Heart left ventricle (tissue), 16 donors: ENCODE measurements at regions of chr6 and their contacts with region 1.

Region 1: DNA sequence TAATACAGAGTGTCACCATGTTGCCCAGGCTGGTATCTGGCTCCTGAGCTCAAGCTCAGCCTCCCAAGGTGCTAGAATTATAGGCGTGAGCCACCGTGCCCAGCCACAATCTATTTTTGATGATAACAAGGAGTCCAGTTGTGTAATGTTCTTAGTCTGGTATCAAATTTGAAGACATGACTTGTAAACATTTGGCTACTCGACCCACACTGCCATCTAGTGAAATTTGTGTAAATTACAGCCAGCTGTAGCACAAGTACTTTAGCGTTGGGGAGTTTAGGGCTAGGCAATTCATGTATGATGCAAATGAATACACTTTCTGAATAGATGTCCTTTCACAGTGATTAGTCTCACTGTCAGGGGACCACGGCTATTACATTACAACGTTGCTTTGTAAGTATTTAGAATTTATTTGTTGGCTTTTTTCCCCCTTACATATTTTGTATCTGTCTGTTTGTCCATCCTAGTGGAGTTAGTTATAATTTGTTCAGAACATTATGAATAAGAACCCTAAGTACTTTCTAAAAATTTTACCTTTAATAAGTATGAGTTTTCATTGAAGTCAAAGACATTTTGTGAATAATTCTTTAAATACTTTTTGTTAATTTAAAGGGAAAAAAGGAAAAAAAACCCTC is 139.7 kb downstream of the PRDM13 start:
- DNase-seq: peak in 3 of 5 donors; percentile 17 to 43 (median 33)
- ATAC-seq: peak in 3 of 4 donors; percentile 60 to 72 (median 70)
- H3K4me3 ChIP-seq: no peak overlapping the region
- H3K27ac ChIP-seq: no peak overlapping the region
- H3K4me1 ChIP-seq: peaks cover 0 to 3% (median 0%) of the 10 kb centered on the region in 12 donors
- H3K27me3 ChIP-seq: peaks cover 0 to 24% (median 0%) of the 10 kb centered on the region in 9 donors
- CTCF ChIP-seq: peak; percentile 64 to 91 (median 82)
- POLR2A ChIP-seq: no peak

Region 2: GRCh38 chr6:99330159-99330558 is 416.2 kb before region 1 on chr6:
- intact Hi-C with region 1: loop called in 2 of 10 experiments (anchors 10 kb)
- DNase-seq: peak in 2 of 5 donors; percentile 22 to 29
- ATAC-seq: peak in 3 of 4 donors; percentile 42 to 53 (median 50)
- H3K4me3 ChIP-seq: no peak overlapping the region
- H3K27ac ChIP-seq: no peak overlapping the region
- H3K4me1 ChIP-seq: no peaks in the 10 kb centered on the region
- H3K27me3 ChIP-seq: peaks cover 0 to 6% (median 0%) of the 10 kb centered on the region in 9 donors
- CTCF ChIP-seq: peak; percentile 44 to 82 (median 66)
- POLR2A ChIP-seq: no peak

Region 3: DNA sequence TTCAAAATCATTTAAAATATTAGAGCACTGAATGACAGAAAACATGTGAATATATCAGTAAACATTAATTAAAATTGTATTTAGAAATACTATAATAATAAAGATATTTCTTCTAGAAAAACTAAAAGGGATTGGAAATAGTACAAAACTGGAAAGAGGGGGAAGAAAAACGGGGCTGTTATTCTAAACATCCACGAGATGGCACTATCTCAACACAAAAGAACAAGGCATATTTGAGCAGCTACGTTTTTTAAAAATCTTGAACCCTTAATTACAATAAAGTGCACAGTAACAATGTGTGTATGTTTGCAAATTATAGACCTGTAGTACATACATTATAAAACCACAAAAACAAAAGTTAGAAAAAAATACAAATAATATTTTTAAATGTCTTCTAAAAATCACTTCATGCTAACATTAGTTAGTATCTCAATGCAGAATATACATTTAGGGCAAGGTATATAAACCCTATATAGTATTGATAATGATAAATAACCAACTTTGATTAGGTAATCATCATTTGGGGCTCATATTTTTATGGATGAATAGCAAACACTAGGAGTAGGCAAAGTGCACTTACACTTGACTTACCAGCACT is 278.8 kb before region 1 on chr6:
- intact Hi-C with region 1: loop called (anchors 1 to 5 kb)
- DNase-seq: no peak
- ATAC-seq: no peak
- H3K4me3 ChIP-seq: no peak overlapping the region
- H3K27ac ChIP-seq: no peak overlapping the region
- H3K4me1 ChIP-seq: no peaks in the 10 kb centered on the region
- H3K27me3 ChIP-seq: no peaks in the 10 kb centered on the region
- CTCF ChIP-seq: peak; percentile 43 to 79 (median 69)
- POLR2A ChIP-seq: no peak

Region 4: DNA sequence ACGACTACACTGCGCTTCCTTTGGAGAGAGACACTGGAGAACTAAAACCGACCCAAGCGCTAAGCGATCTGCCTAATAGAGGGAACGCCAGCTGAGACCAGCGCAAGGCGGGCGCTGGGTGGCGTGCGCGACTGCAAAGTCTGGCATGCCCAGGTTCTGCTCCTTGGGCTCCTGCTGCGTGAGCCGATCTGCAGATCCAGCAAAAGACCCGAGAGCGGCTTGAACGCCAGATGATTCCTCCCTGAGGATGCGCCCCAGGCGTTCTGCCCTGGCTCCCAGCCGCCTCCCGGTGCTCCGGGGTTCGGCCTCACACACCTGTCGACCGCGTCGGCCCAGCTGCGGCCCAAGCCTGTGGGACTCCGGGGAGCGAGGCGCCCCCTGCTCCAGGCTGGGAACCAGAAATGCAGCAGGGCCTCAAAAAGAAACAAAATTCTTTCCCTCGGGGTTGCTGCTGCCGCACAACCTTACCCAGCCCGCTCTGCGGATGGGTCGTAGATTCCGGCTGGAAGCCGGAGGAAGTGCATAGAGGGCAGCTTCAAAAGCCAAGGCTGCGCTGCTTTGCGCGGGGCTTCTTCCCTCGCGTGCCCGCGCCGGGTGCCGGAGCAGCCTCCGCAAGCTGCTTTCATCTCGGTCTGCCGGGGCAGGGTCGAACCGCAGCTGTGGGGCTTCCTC is 157.6 kb before region 1 on chr6:
- intact Hi-C with region 1: loop called in 9 of 10 experiments (anchors 5 to 10 kb)
- DNase-seq: peak in 4 of 5 donors; percentile 44 to 79 (median 60)
- ATAC-seq: peak; percentile 83 to 95 (median 95)
- H3K4me3 ChIP-seq: peak overlapping the region; percentile 25 to 63 (median 52)
- H3K27ac ChIP-seq: no peak overlapping the region
- H3K4me1 ChIP-seq: peaks cover 0 to 39% (median 20%) of the 10 kb centered on the region in 12 donors
- H3K27me3 ChIP-seq: peaks cover 21 to 70% (median 57%) of the 10 kb centered on the region in 9 donors
- CTCF ChIP-seq: peak; percentile 8 to 60 (median 41)
- POLR2A ChIP-seq: no peak